WTC11 (cell line): ENCODE measurements at regions of chr10 and their contacts with region 1.

Region 1: DNA sequence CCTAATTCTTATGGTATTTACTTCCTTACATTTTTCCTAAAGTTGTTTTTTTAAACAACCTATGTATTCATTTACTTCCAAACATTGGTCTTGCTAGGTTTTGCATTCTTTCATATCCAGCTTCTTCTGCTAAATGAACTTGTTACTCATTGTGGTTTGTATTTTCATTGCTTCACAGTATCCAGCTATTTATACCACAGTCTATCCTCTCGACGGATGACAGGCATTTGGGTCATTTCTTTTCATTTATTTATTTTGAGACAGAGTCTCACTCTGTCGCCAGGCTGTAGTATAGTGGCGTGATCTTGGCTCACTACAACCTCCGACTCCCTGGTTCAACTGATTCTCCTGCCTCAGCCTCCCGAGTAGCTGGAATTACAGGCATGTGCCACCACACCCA is 66.8 kb downstream of the CCDC6 start:
- DNase-seq: no peak
- ATAC-seq: no peak
- H3K4me3 Mint-ChIP-seq: no peak overlapping the region
- H3K27ac Mint-ChIP-seq: no peak overlapping the region
- H3K4me1 Mint-ChIP-seq: peaks cover 30% of the 10 kb centered on the region
- H3K27me3 Mint-ChIP-seq: no peaks in the 10 kb centered on the region
- CTCF ChIP-seq: no peak

Region 2: GRCh38 chr10:59993931-59994330 is 154.3 kb after region 1 on chr10:
- CTCF ChIA-PET with region 1: no interaction called
- POLR2A ChIA-PET with region 1: interaction called, 12 read pairs
- DNase-seq: no peak
- ATAC-seq: no peak
- H3K4me3 Mint-ChIP-seq: no peak overlapping the region
- H3K27ac Mint-ChIP-seq: no peak overlapping the region
- H3K4me1 Mint-ChIP-seq: peaks cover 17% of the 10 kb centered on the region
- H3K27me3 Mint-ChIP-seq: no peaks in the 10 kb centered on the region
- CTCF ChIP-seq: no peak